Head of caudate nucleus (tissue), 42 donors: ENCODE measurements at regions of chr5 and their contacts with region 1.

Region 1: DNA sequence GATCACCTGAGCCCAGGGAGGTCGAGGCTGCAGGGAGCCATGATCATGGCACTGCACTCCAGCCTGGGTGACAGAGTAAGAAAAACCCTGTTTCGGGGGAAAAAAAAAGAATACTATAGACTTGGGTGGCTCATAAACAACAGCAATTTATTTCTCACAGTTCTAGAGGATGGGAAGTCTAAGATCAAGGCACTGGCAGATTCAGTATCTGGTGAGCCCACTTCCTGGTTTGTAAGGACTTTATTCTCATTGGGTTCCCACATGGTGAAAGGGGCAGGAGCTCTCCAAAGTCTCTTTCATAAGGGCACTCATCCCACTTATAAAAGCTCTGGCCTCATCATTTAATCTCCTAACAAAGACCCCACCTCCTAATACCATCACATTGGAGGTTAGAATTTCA is 8.7 kb downstream of the HINT1 start:
- DNase-seq: no peak

Region 2: DNA sequence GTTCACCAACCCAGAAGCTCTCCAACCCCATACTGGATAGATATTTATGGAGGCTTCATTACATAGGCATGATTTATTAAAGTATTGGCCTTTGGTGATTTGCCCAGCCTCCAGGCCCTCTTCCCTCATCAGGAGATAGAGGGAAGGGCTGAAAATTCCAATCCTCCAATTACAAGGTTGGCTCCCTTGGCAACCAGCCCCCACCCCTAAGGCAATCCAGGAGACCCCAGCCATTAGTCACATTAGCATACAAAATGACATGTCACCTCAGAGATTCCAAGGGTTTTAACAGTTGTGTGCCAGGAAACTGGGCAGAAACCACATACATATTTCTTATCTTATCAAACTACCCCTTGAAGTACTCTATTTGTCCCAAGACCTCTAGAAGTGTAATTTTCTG is 201.3 kb before region 1 on chr5:
- intact Hi-C with region 1: no loop called
- DNase-seq: no peak

Region 3: GRCh38 chr5:131109540-131110255 is 46.7 kb before region 1 on chr5:
- intact Hi-C with region 1: no loop called
- DNase-seq: peak in 22 of 42 donors; percentile 17 to 81 (median 55)

Region 4: GRCh38 chr5:131270809-131271208 is 114.4 kb after region 1 on chr5:
- intact Hi-C with region 1: loop called (anchors 5 kb)
- DNase-seq: no peak

Region 5: GRCh38 chr5:131693894-131694293 is 537.5 kb after region 1 on chr5:
- intact Hi-C with region 1: no loop called
- DNase-seq: no peak